ENCODE measurements at regions of chr1 and their contacts with region 1.

Region 1: DNA sequence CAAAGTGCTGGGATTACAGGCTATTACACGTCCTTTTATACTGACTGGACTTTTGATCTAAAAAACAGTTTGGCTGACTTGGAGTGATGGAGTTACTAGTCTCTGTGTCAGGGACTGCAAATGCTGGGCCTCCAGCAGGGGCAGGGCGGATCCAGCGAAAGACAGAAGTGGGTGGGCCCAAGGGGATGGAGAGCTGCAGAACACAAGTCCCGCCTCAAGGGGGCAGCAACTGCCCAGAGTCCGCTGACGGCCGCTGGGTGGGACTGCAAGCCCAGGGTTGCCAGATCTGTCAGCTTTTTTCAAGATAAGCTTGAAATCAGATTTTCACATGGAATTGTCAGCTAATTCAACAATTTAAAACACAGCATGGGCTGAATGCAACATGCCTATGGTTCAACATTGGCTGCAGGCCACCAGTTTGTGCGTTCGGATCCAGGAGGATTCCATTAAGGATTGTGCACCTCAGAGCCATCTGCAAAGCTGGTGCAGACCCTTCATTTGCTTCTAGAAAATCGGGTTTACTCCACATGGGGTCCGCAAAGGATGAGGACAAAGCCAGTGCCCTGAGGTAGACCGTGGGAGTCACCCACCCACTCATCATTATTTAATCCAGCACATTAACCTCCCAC is 10.7 kb downstream of the STMN1 start:
- DNase-seq: peak; percentile 92
- H3K4me3 ChIP-seq: no peak overlapping the region
- H3K27ac ChIP-seq: peak overlapping the region in 1 of 4 donors; percentile 44
- H3K4me1 ChIP-seq: peaks cover 0 to 28% (median 8%) of the 10 kb centered on the region in 4 donors
- H3K27me3 ChIP-seq: no peaks in the 10 kb centered on the region
- CTCF ChIP-seq: peak; percentile 97 to 100 (median 98)
- EP300 ChIP-seq: no peak
- POLR2A ChIP-seq: no peak

Region 2: DNA sequence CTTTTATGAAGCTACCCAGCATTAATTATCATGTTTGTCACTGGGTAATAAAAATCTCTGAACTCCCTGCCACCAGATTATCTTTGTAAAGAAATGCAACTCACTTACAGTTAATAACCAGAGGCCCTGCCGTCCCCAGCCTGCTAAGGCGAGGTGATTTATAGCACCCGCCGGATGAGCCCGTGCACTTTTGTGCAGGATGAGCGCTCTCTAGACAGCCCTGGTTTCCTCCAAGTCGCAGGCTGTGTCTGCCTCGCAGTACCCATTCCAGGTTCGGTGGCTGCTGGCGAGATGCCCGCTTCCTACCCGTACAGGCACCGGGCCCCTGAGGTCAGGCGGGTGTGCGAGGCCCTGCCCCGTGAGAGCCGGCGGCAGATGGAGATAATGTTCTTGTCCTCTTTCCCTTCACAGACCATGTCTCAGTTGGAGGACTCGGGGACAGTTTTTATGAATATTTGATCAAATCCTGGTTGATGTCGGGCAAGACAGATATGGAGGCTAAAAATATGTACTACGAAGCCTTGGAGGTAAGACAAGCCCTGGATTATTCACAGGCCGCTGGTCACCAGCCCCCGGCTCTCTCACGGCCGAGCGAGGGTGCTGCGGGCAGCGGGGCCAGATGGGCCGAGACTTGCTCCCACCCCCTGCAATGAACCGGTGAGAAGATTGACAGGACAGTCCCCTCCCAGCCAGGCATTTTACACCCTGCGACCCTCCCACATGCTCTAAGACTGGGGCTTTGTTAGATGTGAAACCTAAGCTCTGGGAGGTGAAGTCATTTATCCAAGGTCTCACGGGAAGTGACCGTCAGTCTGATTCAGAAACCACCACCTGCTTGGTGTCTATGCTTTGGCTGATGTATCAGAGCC is 124.0 kb before region 1 on chr1:
- in situ Hi-C with region 1: no loop called
- intact Hi-C with region 1: no loop called
- DNase-seq: peak; percentile 50
- H3K4me3 ChIP-seq: no peak overlapping the region
- H3K27ac ChIP-seq: peak overlapping the region in 2 of 4 donors; percentile 13
- H3K4me1 ChIP-seq: peaks cover 0 to 40% (median 17%) of the 10 kb centered on the region in 4 donors
- H3K27me3 ChIP-seq: no peaks in the 10 kb centered on the region
- CTCF ChIP-seq: no peak
- EP300 ChIP-seq: no peak
- POLR2A ChIP-seq: no peak

Region 3: DNA sequence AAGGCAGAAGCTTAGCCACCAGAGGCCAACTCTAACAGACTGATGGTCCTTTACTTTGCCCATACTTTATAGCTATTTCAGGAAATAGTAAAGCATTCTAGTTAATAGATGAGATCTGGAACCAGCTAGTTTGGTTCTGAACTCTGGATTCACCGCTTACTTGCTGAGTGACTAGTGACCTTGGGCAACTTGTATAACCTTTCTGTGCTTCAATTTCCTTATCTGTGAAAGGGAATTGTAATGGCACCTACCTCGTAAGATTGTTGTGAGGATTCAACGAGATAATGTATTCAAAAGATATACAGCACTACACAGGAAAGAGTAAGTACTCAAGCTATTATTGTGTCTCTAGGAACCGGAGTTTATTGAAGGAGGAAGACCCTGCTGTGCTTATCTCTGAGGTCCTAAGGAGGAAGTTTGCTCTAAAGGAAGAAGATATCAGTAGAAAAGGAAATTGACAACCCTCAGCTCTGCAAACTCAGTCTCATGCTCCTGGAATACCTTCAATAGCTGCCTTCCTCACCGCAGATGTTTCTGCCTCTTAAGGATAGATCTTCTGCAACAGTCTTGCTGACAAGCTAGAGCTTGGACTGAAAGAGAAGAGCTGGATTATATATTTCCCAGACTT is 63.8 kb before region 1 on chr1:
- in situ Hi-C with region 1: no loop called
- intact Hi-C with region 1: no loop called
- DNase-seq: no peak
- H3K4me3 ChIP-seq: no peak overlapping the region
- H3K27ac ChIP-seq: no peak overlapping the region
- H3K4me1 ChIP-seq: no peaks in the 10 kb centered on the region
- H3K27me3 ChIP-seq: no peaks in the 10 kb centered on the region
- CTCF ChIP-seq: no peak
- EP300 ChIP-seq: no peak
- POLR2A ChIP-seq: no peak

Region 4: DNA sequence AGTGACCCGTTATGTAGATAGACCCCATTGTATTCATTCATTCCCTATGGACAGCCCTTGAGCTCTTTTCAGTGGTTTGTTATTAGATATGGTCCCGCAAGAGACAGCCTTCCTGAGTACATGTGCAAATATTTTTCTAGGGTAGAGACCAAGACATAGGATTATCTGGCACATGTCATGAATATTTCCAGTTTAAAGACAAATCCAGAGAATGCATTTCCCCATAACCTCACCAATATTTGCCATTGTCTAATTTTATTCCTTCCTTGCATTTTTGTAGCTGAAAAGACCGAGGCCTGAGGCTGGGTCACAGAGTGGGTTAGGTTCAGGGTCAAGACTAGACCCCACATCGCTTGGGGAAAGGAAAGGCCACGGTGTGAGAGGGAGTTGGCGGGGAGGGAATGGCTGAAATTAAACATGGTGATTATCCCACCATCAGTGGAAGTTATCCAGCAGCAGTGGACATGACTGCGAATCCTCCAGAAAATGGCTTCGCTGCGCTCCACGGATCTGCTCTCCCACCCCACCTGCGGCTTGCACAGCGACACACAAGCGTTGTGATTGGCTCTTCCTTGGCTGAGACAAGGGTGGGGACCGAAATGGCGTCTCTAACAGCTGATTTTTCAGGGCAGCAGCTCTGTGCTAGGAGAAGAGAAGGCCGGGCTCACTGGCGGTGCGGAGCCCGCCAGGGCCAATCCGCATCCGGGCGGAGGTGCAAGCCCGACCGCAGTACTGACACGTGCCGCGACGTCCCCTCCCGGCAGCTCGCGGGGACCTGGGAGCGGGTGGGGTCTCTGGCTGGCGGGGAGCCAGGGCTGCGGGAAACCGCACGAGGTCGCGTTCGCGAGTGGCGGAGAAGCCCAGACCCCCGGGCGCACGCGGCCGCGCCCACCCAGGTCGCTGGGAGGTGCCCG is 26.8 kb after region 1 on chr1:
- in situ Hi-C with region 1: no loop called
- intact Hi-C with region 1: no loop called
- DNase-seq: peak; percentile 36
- H3K4me3 ChIP-seq: peak overlapping the region; percentile 16 to 51 (median 40)
- H3K27ac ChIP-seq: peak overlapping the region; percentile 59 to 78 (median 66)
- H3K4me1 ChIP-seq: peaks cover 0 to 35% (median 17%) of the 10 kb centered on the region in 4 donors
- H3K27me3 ChIP-seq: peaks cover 21% of the 10 kb centered on the region
- CTCF ChIP-seq: no peak
- EP300 ChIP-seq: no peak
- POLR2A ChIP-seq: no peak

Region 5: GRCh38 chr1:25997828-25998761 is 102.6 kb after region 1 on chr1 and contains the start of gene PAFAH2:
- in situ Hi-C with region 1: loop called (anchors 5 to 10 kb)
- intact Hi-C with region 1: loop called (anchors 2 kb)
- DNase-seq: peak; percentile 98
- H3K4me3 ChIP-seq: peak within 1 kb of the TSS; percentile 49 to 86 (median 57)
- H3K27ac ChIP-seq: peak within 1 kb of the TSS; percentile 90 to 96 (median 92)
- H3K4me1 ChIP-seq: peaks cover 4 to 18% (median 11%) of the 10 kb centered on the region in 4 donors
- H3K27me3 ChIP-seq: no peaks in the 10 kb centered on the region
- CTCF ChIP-seq: peak; percentile 87 to 100 (median 95)
- EP300 ChIP-seq: no peak
- POLR2A ChIP-seq: peak; percentile 60
- total RNA-seq, gene PAFAH2: 23.1 to 60.1 (median 38.8) TPM

Region 6: DNA sequence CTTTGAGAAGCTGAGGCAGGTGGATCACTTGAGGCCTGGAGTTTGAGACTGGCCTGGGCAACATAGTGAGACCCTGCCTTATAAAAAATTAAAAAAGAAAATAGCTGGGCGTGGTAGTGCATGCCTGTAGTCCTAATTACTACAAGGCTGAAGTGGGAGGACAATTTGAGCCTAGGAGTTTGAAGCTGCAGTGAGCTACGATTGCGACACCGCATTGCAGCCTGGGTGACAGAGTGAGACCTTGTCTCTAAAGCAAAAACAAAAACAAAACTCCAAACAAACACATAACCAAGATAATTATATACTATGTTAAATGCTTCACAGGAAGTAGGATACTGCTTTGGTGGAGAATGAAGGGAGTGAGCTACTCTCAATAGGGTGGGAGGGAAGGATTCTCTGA is 107.8 kb after region 1 on chr1:
- in situ Hi-C with region 1: loop called (anchors 5 to 10 kb)
- intact Hi-C with region 1: loop called (anchors 2 kb)
- DNase-seq: no peak
- H3K4me3 ChIP-seq: no peak overlapping the region
- H3K27ac ChIP-seq: no peak overlapping the region
- H3K4me1 ChIP-seq: peaks cover 0 to 5% (median 4%) of the 10 kb centered on the region in 4 donors
- H3K27me3 ChIP-seq: no peaks in the 10 kb centered on the region
- CTCF ChIP-seq: no peak
- EP300 ChIP-seq: no peak
- POLR2A ChIP-seq: no peak

Region 7: GRCh38 chr1:26009796-26010460 is 114.4 kb after region 1 on chr1:
- in situ Hi-C with region 1: loop called in 1 of 4 experiments (anchors 10 kb)
- intact Hi-C with region 1: no loop called
- DNase-seq: no peak
- H3K4me3 ChIP-seq: no peak overlapping the region
- H3K27ac ChIP-seq: no peak overlapping the region
- H3K4me1 ChIP-seq: no peaks in the 10 kb centered on the region
- H3K27me3 ChIP-seq: no peaks in the 10 kb centered on the region
- CTCF ChIP-seq: no peak
- EP300 ChIP-seq: no peak
- POLR2A ChIP-seq: no peak